Activated CD4-positive, alpha-beta memory T cell treated with anti-CD3 and anti-CD28 coated beads for 36 hours (primary cell): ENCODE measurements at regions of chr13 and their contacts with region 1.

Region 1: GRCh38 chr13:59318320-59318930 is 845.3 kb downstream of the DIAPH3 start:
- DNase-seq: peak; percentile 67
- H3K4me3 Mint-ChIP-seq: no peak overlapping the region
- H3K27ac Mint-ChIP-seq: no peak overlapping the region
- H3K4me1 Mint-ChIP-seq: no peaks in the 10 kb centered on the region
- H3K27me3 Mint-ChIP-seq: peaks cover 4% of the 10 kb centered on the region

Region 2: GRCh38 chr13:57629821-57630235 is 1688.6 kb before region 1 on chr13:
- CTCF ChIA-PET with region 1: interaction called, 4 read pairs
- POLR2A ChIA-PET with region 1: no interaction called
- intact Hi-C with region 1: loop called (anchors 2 kb)
- DNase-seq: peak; percentile 68
- H3K4me3 Mint-ChIP-seq: peak overlapping the region; percentile 44
- H3K27ac Mint-ChIP-seq: no peak overlapping the region
- H3K4me1 Mint-ChIP-seq: peaks cover 41% of the 10 kb centered on the region
- H3K27me3 Mint-ChIP-seq: peaks cover 66% of the 10 kb centered on the region

Region 3: DNA sequence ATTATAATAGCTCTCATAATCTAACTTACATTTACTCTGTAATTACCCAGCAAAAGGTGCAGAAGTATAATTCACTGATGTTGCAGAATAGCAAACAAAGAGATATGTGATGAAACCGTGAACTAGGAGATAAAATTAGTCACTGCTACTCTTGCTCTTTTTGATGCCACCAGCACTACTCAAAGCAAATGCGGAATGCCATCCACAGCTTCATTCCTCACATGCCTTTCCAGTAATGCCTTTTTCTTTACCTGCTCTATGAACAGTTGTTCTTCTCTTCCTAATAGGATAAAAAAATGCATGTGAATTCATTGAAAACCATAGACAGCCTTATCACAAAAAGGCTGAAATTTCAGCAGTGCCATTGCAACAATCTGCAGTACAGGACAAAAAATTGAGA is 284.2 kb before region 1 on chr13:
- CTCF ChIA-PET with region 1: no interaction called
- POLR2A ChIA-PET with region 1: no interaction called
- intact Hi-C with region 1: no loop called
- DNase-seq: no peak
- H3K4me3 Mint-ChIP-seq: no peak overlapping the region
- H3K27ac Mint-ChIP-seq: no peak overlapping the region
- H3K4me1 Mint-ChIP-seq: no peaks in the 10 kb centered on the region
- H3K27me3 Mint-ChIP-seq: no peaks in the 10 kb centered on the region

Region 4: GRCh38 chr13:59332966-59333365 is 14.5 kb after region 1 on chr13:
- CTCF ChIA-PET with region 1: no interaction called
- POLR2A ChIA-PET with region 1: no interaction called
- intact Hi-C with region 1: no loop called
- DNase-seq: no peak
- H3K4me3 Mint-ChIP-seq: no peak overlapping the region
- H3K27ac Mint-ChIP-seq: no peak overlapping the region
- H3K4me1 Mint-ChIP-seq: no peaks in the 10 kb centered on the region
- H3K27me3 Mint-ChIP-seq: peaks cover 2% of the 10 kb centered on the region

Region 5: GRCh38 chr13:59734393-59734792 is 416.0 kb after region 1 on chr13:
- CTCF ChIA-PET with region 1: no interaction called
- POLR2A ChIA-PET with region 1: no interaction called
- intact Hi-C with region 1: no loop called
- DNase-seq: peak; percentile 16
- H3K4me3 Mint-ChIP-seq: no peak overlapping the region
- H3K27ac Mint-ChIP-seq: no peak overlapping the region
- H3K4me1 Mint-ChIP-seq: peaks cover 2% of the 10 kb centered on the region
- H3K27me3 Mint-ChIP-seq: no peaks in the 10 kb centered on the region